ENCODE measurements at regions of chr6 and their contacts with region 1.

Region 1: DNA sequence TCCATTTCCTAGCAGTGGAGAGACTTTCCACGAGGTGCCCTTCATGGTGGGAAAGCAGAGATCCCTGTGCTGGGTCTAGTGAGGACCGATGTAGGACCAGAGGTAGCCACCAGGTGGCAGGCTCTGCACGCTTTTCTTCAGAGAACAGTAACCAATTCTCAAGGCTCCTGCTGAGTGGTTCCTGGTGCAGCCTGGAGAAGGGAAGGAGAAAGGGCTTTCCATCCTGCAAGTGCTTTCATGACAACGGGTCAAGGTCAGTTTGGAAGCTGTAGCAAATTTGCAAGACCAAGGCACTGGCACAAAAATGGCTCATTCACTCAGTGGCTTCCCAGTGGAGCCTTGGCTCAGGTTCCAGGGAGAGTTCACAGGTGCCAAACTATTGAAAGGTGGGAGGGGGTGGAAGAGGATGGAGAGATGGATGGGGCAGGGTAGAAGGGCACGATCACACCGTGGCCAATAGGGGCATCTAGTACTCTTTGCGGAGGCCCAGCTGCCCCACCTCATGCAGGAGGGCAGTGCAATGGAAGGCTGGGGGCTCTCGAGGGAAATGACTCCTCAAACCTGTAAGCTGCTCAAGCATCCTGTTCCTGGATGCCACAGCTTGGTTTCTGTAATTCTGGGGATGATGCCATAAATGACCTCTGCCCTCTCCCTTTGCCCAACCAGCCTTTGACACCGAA is 25.5 kb upstream of the KCNK16 start:
- DNase-seq: peak; percentile 21 to 49 (median 48)
- H3K4me3 ChIP-seq: no peak overlapping the region
- H3K4me3 Mint-ChIP-seq: no peak overlapping the region
- H3K27ac ChIP-seq: no peak overlapping the region
- H3K27ac Mint-ChIP-seq: no peak overlapping the region
- H3K4me1 ChIP-seq: peaks cover 0 to 4% of the 10 kb centered on the region in 2 donors
- H3K4me1 Mint-ChIP-seq: peaks cover 8% of the 10 kb centered on the region
- H3K27me3 ChIP-seq: no peaks in the 10 kb centered on the region
- H3K27me3 Mint-ChIP-seq: peaks cover 2 to 6% (median 4%) of the 10 kb centered on the region in 3 donors
- CTCF ChIP-seq: peak; percentile 93

Region 2: DNA sequence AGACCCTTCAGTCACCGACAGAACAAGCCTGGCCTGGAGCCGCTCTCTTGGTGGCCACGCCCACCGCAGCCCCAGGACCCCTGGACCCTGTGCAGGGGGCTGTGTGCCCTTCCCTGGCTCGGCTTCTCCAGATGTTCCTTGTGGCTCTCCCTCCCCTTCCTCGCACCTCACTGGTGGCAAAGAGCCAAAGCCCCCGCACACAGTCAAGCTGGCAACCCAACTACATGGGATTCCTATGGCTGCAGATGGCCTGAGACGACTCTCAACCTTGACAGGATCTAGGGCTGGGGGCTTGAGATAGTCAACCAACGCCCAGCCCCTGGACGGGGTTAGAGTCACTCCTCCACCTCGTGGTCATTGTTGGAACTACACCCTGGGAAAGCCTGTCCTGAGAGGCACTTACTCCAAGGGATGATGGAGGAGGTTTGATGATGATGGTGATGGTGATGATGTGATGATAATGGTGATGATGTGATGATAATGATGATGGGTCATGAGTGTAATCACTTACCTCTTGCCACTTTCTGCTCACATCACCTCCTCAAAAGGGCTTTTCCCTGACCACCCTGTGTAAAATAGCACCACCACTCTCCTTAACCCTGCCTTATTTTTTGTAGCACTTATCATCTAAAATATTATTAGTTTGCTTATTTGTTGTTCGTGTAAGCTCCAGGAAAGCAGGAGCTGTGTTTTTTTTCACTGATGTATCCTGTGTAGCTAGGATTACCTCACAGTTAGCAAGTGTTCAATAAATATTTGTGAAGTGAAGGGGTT is 960.7 kb after region 1 on chr6:
- intact Hi-C with region 1: loop called in 1 of 2 experiments (anchors 5 kb)
- DNase-seq: peak in 2 of 3 donors; percentile 5 to 21
- H3K4me3 ChIP-seq: no peak overlapping the region
- H3K4me3 Mint-ChIP-seq: no peak overlapping the region
- H3K27ac ChIP-seq: no peak overlapping the region
- H3K27ac Mint-ChIP-seq: no peak overlapping the region
- H3K4me1 ChIP-seq: no peaks in the 10 kb centered on the region
- H3K4me1 Mint-ChIP-seq: no peaks in the 10 kb centered on the region
- H3K27me3 ChIP-seq: peaks cover 6 to 8% of the 10 kb centered on the region in 2 donors
- H3K27me3 Mint-ChIP-seq: peaks cover 19 to 24% (median 21%) of the 10 kb centered on the region in 3 donors
- CTCF ChIP-seq: peak; percentile 91